ENCODE measurements at regions of chrX and their contacts with region 1.

Region 1: GRCh38 chrX:139554376-139554775 is 23.8 kb downstream of the F9 start:
- DNase-seq: peak; percentile 56
- H3K4me3 ChIP-seq: peak overlapping the region; percentile 63
- H3K27ac ChIP-seq: peak overlapping the region; percentile 94
- H3K4me1 ChIP-seq: peaks cover 49% of the 10 kb centered on the region
- CTCF ChIP-seq: no peak

Region 2: DNA sequence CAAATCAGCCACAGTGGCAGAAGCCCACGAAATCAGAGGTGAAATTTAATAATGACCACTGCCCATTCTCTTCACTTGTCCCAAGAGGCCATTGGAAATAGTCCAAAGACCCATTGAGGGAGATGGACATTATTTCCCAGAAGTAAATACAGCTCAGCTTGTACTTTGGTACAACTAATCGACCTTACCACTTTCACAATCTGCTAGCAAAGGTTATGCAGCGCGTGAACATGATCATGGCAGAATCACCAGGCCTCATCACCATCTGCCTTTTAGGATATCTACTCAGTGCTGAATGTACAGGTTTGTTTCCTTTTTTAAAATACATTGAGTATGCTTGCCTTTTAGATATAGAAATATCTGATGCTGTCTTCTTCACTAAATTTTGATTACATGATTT is 23.8 kb before region 1 on chrX and contains the start of gene F9:
- CTCF ChIA-PET with region 1: no interaction called
- POLR2A ChIA-PET with region 1: no interaction called
- intact Hi-C with region 1: no loop called
- DNase-seq: no peak
- H3K4me3 ChIP-seq: no peak within 1 kb of the TSS
- H3K27ac ChIP-seq: no peak within 1 kb of the TSS
- H3K4me1 ChIP-seq: no peaks in the 10 kb centered on the region
- CTCF ChIP-seq: no peak
- total RNA-seq, gene F9: not detected in 2 replicates

Region 3: DNA sequence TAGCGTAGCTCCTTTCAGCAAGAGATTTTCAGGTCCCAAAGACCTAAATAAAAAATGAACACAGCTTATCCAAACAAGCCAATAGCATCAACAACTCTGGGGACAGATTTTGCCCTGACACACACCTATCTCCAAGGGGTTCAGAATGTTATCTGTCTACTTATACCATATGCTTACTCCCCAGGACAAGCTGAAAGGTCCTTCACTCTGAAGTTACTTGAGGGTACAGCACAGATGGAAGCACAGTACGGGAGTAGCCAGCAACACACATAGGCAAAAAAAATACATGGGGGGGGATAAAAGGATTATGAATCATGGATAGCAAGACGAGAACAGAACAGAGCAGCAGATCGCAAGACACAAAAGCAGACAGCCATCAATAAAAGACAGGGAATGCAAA is 244.3 kb after region 1 on chrX:
- CTCF ChIA-PET with region 1: no interaction called
- POLR2A ChIA-PET with region 1: interaction called, 10 read pairs
- intact Hi-C with region 1: no loop called
- DNase-seq: no peak
- H3K4me3 ChIP-seq: no peak overlapping the region
- H3K27ac ChIP-seq: no peak overlapping the region
- H3K4me1 ChIP-seq: no peaks in the 10 kb centered on the region
- CTCF ChIP-seq: no peak

Region 4: DNA sequence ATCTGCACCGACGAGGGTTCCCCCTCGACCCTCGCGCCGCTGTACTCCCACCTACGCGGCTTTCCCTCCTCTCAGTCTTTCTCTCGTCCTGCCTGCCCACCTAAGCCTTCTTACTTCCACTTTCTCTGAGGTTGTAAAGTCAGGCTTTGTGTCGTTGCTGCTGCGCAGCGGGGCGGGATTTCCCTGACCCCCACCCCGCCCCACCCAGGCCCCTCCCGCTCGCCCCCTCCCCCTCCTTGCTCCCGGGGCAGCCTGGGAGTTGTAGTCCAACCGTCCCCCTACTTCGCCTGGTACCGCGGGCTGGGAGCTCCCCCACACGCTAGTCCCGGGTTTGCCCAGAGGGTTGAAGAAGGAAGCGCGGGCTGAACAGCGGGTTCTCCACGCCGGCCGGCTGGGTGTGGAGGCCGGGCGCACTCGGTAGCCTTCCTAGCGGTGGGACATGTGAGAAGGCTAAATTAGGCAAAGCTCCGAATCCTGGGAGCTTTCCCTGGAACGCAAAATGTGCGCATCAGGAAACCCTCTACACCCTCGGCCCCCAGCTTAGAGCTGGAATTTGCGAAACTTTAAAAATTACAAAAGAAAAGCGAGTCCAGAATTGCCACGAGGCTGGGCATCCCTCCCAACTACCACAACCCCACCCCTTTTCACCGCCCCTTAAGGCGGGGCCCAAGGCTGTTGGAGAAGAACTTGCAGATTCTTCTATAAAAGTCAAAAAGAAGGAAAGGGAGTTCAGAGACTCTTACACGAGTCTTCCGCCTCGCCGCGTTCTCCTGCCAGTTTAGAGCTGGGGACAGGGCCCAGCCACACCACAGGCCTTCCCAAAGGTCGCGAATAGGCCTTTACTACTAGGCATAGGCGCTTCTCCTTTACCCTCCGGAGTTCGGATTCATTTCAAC is 378.8 kb after region 1 on chrX and contains the start of gene ATP11C:
- CTCF ChIA-PET with region 1: no interaction called
- POLR2A ChIA-PET with region 1: interaction called, 5 read pairs
- intact Hi-C with region 1: loop called (anchors 2 kb)
- DNase-seq: peak; percentile 86
- H3K4me3 ChIP-seq: peak within 1 kb of the TSS; percentile 81
- H3K27ac ChIP-seq: peak within 1 kb of the TSS; percentile 82
- H3K4me1 ChIP-seq: peaks cover 31% of the 10 kb centered on the region
- CTCF ChIP-seq: no peak; the same call in 1 of the 2 replicates
- total RNA-seq, gene ATP11C: 20.6 and 20.9 TPM in 2 replicates